HEK293 (cell line): ENCODE measurements at regions of chr11 and their contacts with region 1.

Region 1: GRCh38 chr11:131397675-131398074 is 27.3 kb downstream of the NTM start:
- H3K4me3 ChIP-seq: no peak overlapping the region
- H3K27ac ChIP-seq: no peak overlapping the region
- H3K4me1 ChIP-seq: no peaks in the 10 kb centered on the region
- CTCF ChIP-seq: no peak

Region 2: DNA sequence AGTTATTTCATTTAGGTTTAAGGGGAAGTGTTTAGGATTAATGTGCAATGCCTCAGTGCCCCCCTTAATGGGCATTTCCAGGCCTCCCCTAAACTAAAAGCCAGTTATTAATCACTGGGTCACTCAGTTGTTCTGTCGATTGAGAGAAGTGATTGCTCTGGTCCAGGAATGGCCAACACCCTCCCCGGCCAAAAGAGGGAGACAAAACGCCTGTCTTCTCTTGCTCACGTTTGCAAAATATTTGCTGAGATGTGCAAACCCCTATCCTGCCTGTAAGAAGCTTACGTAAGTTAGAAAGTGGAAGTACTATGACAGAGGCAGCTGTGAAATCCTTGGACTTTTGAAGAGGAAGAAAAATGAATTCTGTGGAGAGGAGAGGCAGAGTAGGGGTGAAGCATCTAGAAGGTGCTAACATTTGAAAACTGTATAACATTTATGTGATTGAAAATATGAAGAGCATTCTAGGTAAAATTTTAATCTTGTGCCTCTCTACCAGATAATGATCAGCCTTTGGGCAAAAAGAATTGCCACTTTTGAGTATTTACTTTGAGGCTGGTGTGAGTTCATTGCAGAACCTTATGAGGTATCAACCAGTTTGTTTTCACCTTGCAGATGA is 10.5 kb after region 1 on chr11:
- CTCF ChIA-PET with region 1: interaction called, 15 read pairs
- POLR2A ChIA-PET with region 1: no interaction called
- H3K4me3 ChIP-seq: no peak overlapping the region
- H3K27ac ChIP-seq: no peak overlapping the region
- H3K4me1 ChIP-seq: no peaks in the 10 kb centered on the region
- CTCF ChIP-seq: no peak